WTC11 (cell line): ENCODE measurements at regions of chr11 and their contacts with region 1.

Region 1: DNA sequence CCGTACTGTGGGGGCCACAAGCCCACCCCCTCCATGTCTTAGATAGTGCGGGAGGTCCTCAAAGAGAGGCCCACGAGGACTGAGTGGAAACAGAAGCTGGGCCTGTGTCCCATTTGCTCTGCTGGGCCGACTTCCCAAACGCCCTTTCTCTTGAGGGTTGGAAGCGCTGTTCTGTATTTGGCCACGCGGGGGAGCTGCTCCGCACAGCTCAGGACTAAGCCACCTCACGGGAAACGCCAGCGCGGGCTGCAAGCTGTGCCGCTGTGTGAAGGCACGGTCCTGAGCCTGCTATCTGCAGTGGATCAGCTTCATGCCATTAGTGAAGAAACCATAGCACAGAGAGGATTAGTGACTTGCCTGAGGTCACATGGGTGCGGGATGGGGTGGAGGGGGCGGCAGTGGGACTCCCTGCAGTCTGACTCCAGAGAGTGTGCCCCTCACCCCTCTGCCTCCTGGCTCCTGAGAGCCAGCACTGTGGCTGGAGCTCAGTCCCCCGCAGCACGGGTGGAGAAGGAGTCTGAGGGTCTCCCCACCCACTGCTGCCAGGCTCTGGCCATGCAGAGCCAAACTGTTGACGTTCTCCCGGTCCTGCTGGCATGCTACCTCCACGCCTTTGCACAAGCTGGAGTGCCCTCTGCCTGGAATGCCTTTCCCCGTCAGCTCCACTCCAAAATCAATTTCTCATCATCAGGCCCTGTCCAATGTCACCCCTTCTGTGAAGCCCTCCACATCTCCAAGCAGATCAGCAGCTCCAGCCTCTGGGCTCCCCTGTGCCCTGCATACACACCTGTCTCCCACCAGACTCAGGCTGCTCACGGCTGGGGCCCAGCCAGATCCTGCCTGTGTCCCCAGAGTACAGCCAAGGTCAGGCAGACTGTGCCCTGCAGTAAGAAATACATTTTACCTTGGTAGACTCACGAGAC is 51.5 kb upstream of the LRRC32 start:
- DNase-seq: peak; percentile 88
- ATAC-seq: peak; percentile 94
- H3K4me3 Mint-ChIP-seq: peak overlapping the region; percentile 39
- H3K27ac Mint-ChIP-seq: no peak overlapping the region
- H3K4me1 Mint-ChIP-seq: peaks cover 5% of the 10 kb centered on the region
- H3K27me3 Mint-ChIP-seq: peaks cover 22% of the 10 kb centered on the region
- CTCF ChIP-seq: peak; percentile 79

Region 2: GRCh38 chr11:76686261-76687079 is 35.5 kb before region 1 on chr11:
- CTCF ChIA-PET with region 1: interaction called, 26 read pairs
- POLR2A ChIA-PET with region 1: no interaction called
- DNase-seq: no peak
- ATAC-seq: peak; percentile 88
- H3K4me3 Mint-ChIP-seq: no peak overlapping the region
- H3K27ac Mint-ChIP-seq: no peak overlapping the region
- H3K4me1 Mint-ChIP-seq: peaks cover 11% of the 10 kb centered on the region
- H3K27me3 Mint-ChIP-seq: peaks cover 3% of the 10 kb centered on the region; the same call in 1 of the 2 replicates
- CTCF ChIP-seq: no peak

Region 3: GRCh38 chr11:76708946-76709678 is 12.9 kb before region 1 on chr11:
- CTCF ChIA-PET with region 1: interaction called, 18 read pairs
- POLR2A ChIA-PET with region 1: no interaction called
- DNase-seq: no peak
- ATAC-seq: no peak
- H3K4me3 Mint-ChIP-seq: no peak overlapping the region
- H3K27ac Mint-ChIP-seq: no peak overlapping the region
- H3K4me1 Mint-ChIP-seq: peaks cover 11% of the 10 kb centered on the region
- H3K27me3 Mint-ChIP-seq: no peaks in the 10 kb centered on the region
- CTCF ChIP-seq: no peak

Region 4: GRCh38 chr11:76762867-76763572 is 41.0 kb after region 1 on chr11:
- CTCF ChIA-PET with region 1: interaction called, 17 read pairs
- POLR2A ChIA-PET with region 1: no interaction called
- DNase-seq: no peak
- ATAC-seq: no peak
- H3K4me3 Mint-ChIP-seq: no peak overlapping the region
- H3K27ac Mint-ChIP-seq: no peak overlapping the region
- H3K4me1 Mint-ChIP-seq: peaks cover 40% of the 10 kb centered on the region
- H3K27me3 Mint-ChIP-seq: peaks cover 2% of the 10 kb centered on the region
- CTCF ChIP-seq: no peak

Region 5: DNA sequence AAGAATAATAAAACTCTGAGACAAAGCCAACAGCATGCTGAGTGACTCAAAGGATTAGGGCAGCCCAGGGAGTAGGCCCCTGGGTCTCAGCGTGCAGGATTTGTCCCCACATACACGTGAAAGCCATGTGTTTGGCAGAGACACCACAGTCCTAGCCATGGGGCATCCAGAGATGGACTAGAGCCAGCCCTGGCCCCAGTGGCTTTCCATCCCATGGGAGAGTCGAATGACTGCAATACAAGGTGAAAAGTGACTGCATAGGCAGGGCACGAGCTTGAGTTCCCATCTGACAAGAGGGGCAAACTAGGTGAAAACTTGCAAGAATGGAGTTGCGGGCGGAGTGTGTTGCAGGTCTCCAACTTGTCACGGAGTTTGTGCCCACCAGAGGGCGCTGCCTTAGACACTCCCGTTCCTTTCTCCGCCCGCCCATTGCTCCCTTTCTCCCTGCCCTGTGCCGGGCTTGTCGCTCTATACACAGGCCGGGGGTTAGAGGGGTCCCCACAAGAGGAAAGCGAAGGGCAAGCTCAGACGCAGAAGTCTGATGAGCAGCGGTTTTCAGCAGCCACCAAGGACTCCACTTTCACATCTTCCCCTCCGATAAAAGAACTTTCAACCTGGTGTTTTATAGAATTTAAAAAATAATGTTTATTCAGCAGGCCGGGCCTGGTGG is 85.3 kb after region 1 on chr11:
- CTCF ChIA-PET with region 1: interaction called, 31 read pairs
- POLR2A ChIA-PET with region 1: no interaction called
- DNase-seq: peak; percentile 95
- ATAC-seq: peak; percentile 93
- H3K4me3 Mint-ChIP-seq: no peak overlapping the region
- H3K27ac Mint-ChIP-seq: no peak overlapping the region
- H3K4me1 Mint-ChIP-seq: peaks cover 12% of the 10 kb centered on the region
- H3K27me3 Mint-ChIP-seq: no peaks in the 10 kb centered on the region; the same call in 1 of the 2 replicates
- CTCF ChIP-seq: peak; percentile 76